Right cardiac atrium (tissue), 5 donors: ENCODE measurements at regions of chr13 and their contacts with region 1.

Region 1: DNA sequence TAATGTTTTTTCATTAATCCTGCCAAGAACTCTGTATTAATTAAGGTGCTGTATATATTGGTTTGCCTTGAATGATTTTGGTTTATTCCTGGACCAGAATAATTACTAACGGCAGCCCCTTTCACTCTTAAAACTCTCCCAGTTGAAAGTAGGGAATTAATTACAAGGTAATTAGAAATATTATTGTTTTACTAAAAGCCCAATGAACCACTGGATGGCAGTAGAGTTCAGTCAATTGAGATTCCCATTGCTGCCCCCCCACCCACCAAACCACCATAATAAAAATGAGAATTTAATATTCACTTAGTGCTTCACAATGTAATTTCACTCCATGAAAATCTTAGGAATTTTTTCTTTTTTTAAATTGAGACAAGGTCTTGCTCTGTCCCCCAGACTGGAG is 13.7 kb downstream of the WBP4 start:
- DNase-seq: no peak
- ATAC-seq: peak in 1 of 2 donors; percentile 57
- H3K4me3 ChIP-seq: no peak overlapping the region
- H3K27ac ChIP-seq: no peak overlapping the region
- H3K4me1 ChIP-seq: no peaks in the 10 kb centered on the region
- H3K27me3 ChIP-seq: no peaks in the 10 kb centered on the region

Region 2: GRCh38 chr13:41222259-41222852 is 147.3 kb after region 1 on chr13:
- intact Hi-C with region 1: loop called (anchors 5 kb)
- DNase-seq: no peak
- ATAC-seq: peak; percentile 84 to 88
- H3K4me3 ChIP-seq: no peak overlapping the region
- H3K27ac ChIP-seq: no peak overlapping the region
- H3K4me1 ChIP-seq: no peaks in the 10 kb centered on the region
- H3K27me3 ChIP-seq: no peaks in the 10 kb centered on the region